IMR-90 (cell line): ENCODE measurements at regions of chr1 and their contacts with region 1.

Region 1: DNA sequence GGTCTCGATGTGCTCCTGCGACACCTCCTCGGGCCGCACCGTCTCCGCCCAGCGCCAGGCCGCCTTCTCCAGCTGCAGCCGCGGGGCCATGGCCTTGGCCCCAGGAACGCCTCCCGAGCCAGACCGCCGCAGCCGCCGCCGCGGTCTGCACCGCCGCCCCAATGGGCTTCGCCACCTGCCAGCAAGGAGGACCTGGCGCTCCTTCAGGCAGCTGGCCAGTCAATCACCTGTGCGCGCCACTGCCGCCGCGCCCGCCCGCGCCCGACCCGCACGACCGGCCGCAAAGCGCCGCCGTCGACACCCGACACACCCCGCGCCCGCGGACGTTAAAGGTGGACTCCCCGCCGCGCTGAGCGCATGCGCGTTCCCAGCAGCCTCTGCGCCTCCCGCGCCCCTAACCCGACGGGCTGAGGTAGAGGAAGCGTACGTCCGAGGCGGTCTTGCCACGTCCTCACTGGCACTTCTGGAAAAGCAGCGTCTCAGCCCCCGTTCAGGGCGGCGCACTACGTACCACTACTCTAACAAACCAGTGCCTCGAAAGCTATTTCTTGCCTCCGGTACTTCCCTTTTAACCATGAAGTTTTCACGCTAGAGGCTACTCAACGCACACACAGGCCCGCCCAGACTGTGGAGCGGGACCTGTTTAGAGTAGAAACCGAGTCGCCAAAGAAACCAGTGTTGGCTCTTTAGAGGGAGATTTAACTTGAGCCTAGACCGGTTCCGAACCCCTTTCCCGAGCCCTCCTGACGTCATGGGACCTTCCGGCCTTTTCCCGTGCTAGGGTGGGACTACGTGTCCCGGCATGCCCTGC is at the start of gene USP48:
- DNase-seq: peak; percentile 97
- ATAC-seq: peak; percentile 90
- H3K4me3 ChIP-seq: peak within 1 kb of the TSS; percentile 66
- H3K27ac ChIP-seq: peak within 1 kb of the TSS; percentile 95
- H3K4me1 ChIP-seq: 0 out of 2 replicates have a peak, but pooled peaks cover 1% of the 10 kb centered on the region
- H3K27me3 ChIP-seq: no peaks in the 10 kb centered on the region
- CTCF ChIP-seq: no peak
- POLR2A ChIP-seq: peak; percentile 98
- RAD21 ChIP-seq: no peak
- total RNA-seq, gene USP48: 24.7 and 47.2 TPM in 2 replicates

Region 2: DNA sequence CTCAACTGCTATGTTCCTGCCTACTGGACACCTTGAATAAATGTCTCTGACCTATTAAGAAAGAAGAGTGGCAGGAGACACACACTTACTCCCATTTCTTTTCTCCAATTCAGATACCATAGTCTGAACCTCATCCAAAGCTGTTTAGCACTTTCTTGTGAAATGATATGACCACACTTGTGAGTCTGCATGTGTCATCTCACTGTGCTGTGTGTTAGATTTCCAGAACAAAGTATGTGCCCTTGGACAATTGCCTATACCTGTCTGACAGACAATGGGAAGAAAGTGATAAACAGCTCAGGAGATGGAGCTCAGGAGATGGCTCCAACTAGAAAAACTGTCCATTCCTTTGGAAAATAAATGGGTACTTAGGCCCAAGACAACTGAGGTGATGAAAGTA is 48.5 kb before region 1 on chr1:
- CTCF ChIA-PET with region 1: no interaction called
- POLR2A ChIA-PET with region 1: interaction called, 17 read pairs
- dilution Hi-C with region 1: no loop called
- in situ Hi-C with region 1: no loop called
- intact Hi-C with region 1: no loop called
- DNase-seq: peak; percentile 18
- ATAC-seq: no peak
- H3K4me3 ChIP-seq: no peak overlapping the region
- H3K27ac ChIP-seq: no peak overlapping the region
- H3K4me1 ChIP-seq: no peaks in the 10 kb centered on the region; the same call in 1 of the 2 replicates
- H3K27me3 ChIP-seq: no peaks in the 10 kb centered on the region
- CTCF ChIP-seq: no peak
- POLR2A ChIP-seq: no peak
- RAD21 ChIP-seq: no peak

Region 3: GRCh38 chr1:21818656-21819055 is 35.6 kb after region 1 on chr1:
- CTCF ChIA-PET with region 1: no interaction called
- POLR2A ChIA-PET with region 1: no interaction called
- dilution Hi-C with region 1: no loop called
- in situ Hi-C with region 1: no loop called
- intact Hi-C with region 1: loop called (anchors 5 kb)
- DNase-seq: no peak
- ATAC-seq: 0 out of 2 replicates have a peak, but pooled peaks have one; percentile 13
- H3K4me3 ChIP-seq: no peak overlapping the region
- H3K27ac ChIP-seq: no peak overlapping the region
- H3K4me1 ChIP-seq: peaks cover 6% of the 10 kb centered on the region
- H3K27me3 ChIP-seq: peaks cover 3% of the 10 kb centered on the region; the same call in 1 of the 2 replicates
- CTCF ChIP-seq: no peak
- POLR2A ChIP-seq: no peak
- RAD21 ChIP-seq: no peak

Region 4: DNA sequence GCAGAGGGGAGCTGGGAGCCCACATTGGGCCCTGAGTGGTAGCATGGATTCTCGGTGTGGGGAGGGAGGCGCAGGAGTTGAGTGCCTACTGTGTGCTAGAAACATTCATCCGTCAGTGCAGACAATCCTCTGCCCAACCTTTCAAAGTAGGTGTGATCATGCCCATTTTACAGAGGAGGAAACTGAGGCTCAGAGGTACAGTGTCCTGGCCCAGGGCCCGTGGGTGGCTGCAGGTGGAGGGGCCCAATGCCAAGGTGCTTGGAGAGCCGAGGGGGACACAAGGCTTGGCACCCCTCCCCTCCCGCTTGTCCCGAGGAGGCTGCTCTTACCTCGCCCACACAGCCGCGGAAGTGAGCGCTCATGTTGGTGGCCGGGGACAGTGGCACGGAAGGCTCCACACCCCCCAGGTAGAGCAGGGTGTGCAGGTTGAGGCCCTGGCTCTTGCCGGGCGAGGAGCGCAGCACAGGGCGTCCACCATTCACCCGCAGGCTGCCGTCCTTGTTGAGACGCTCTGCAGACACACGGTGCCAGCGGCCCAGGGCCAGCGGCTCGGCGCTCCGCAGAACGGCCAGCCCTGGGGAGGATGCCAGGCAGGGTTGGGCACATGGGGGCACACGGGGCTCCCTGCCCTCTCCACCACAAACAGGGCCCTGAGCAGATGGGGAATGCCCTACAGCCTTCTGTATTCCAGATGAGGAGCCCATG is 45.6 kb after region 1 on chr1:
- CTCF ChIA-PET with region 1: no interaction called
- POLR2A ChIA-PET with region 1: no interaction called
- dilution Hi-C with region 1: no loop called
- in situ Hi-C with region 1: no loop called
- intact Hi-C with region 1: no loop called
- DNase-seq: no peak
- ATAC-seq: no peak
- H3K4me3 ChIP-seq: no peak overlapping the region
- H3K27ac ChIP-seq: no peak overlapping the region
- H3K4me1 ChIP-seq: no peaks in the 10 kb centered on the region
- H3K27me3 ChIP-seq: no peaks in the 10 kb centered on the region
- CTCF ChIP-seq: no peak
- POLR2A ChIP-seq: no peak
- RAD21 ChIP-seq: no peak

Region 5: GRCh38 chr1:21937372-21938221 is 154.5 kb after region 1 on chr1:
- CTCF ChIA-PET with region 1: no interaction called
- POLR2A ChIA-PET with region 1: no interaction called
- dilution Hi-C with region 1: no loop called
- in situ Hi-C with region 1: no loop called
- intact Hi-C with region 1: loop called (anchors 10 kb)
- DNase-seq: peak; percentile 78
- ATAC-seq: peak; percentile 86
- H3K4me3 ChIP-seq: peak overlapping the region; percentile 22
- H3K27ac ChIP-seq: peak overlapping the region; percentile 57
- H3K4me1 ChIP-seq: peaks cover 33% of the 10 kb centered on the region
- H3K27me3 ChIP-seq: no peaks in the 10 kb centered on the region
- CTCF ChIP-seq: no peak
- POLR2A ChIP-seq: 0 out of 2 replicates have a peak, but pooled peaks have one; percentile 14
- RAD21 ChIP-seq: no peak